ENCODE measurements at regions of chr6 and their contacts with region 1.

Region 1: DNA sequence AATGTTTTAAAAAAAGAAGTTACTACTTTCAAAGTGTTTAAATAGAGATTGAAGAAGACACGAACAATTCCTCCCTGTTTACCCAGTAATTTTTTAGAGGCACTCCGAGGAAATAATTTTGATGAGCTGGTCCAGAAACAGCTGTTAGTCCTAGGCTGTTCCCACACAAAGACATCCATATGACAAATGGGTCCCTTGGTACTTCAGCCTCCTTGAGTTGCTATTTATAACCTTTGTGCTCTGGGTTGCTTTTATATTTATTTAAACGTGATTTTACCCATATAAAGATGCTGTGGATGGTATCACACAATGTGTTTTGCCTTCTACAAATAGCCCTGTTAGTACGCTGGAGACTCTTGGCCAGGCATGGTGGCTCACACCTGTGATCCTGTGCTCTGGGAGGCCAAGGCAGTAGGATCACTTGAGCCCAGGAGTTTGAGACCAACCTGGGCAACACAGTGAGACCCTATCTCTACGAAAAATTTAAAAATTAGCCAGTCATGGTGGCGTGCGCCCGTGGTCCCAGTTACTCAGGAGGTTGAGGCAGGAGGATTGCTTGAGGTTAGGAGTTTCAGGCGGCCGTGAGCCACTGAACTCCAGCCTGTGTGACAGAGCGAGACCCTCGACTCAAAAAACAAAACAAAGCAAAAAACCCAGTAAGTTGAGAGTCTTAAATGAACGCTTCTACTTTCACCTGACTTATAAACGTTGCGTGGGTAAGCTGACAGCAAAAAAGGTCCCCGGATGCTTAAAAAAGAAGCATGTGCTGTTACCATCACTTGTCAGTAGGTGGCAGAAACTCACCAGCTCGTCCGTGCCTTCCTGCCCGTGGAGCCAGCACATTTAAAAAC is 56.9 kb upstream of the ARMH2 start:
- DNase-seq: peak; percentile 62
- H3K4me3 ChIP-seq: no peak overlapping the region
- H3K27ac ChIP-seq: no peak overlapping the region
- H3K4me1 ChIP-seq: peaks cover 6% of the 10 kb centered on the region
- H3K27me3 ChIP-seq: no peaks in the 10 kb centered on the region
- CTCF ChIP-seq: peak; percentile 82 to 90 (median 85)
- POLR2A ChIP-seq: no peak

Region 2: DNA sequence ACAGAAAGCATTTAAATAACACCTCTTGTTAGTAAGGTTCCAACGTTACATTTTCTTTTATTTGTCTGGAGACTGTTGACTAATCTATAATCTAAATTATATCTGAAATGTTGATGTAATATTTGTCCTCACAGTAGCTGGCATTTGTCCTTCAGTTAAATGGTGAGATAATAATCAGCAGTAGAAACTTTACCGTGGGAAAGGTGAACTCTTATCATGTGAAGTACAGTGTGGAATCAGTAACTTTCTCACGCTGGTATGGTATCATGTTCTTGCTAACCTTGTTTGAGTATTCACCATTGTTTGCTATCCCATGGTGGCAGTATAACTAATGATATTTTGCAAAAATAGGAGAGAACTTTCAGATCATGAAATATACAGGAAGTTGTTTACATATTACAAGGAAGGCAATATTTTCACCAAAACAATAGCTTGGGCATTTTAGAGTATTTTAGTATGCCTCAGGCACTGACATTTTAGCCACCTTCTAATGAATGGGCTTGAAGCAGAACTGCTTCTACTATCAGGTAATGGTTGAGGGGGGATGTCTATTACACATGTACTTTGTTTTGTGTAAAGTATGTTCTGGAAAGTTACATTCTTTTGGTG is 76.1 kb before region 1 on chr6:
- intact Hi-C with region 1: no loop called
- DNase-seq: peak; percentile 32
- H3K4me3 ChIP-seq: no peak overlapping the region
- H3K27ac ChIP-seq: peak overlapping the region; percentile 45
- H3K4me1 ChIP-seq: no peaks in the 10 kb centered on the region
- H3K27me3 ChIP-seq: no peaks in the 10 kb centered on the region
- CTCF ChIP-seq: peak in 1 of 4 experiments; percentile 5
- POLR2A ChIP-seq: no peak

Region 3: GRCh38 chr6:25070547-25071366 is 215.1 kb after region 1 on chr6:
- intact Hi-C with region 1: loop called (anchors 5 kb)
- DNase-seq: peak; percentile 83
- H3K4me3 ChIP-seq: no peak overlapping the region
- H3K27ac ChIP-seq: no peak overlapping the region
- H3K4me1 ChIP-seq: no peaks in the 10 kb centered on the region
- H3K27me3 ChIP-seq: no peaks in the 10 kb centered on the region
- CTCF ChIP-seq: peak; percentile 72 to 92 (median 87)
- POLR2A ChIP-seq: no peak